OCI-LY7 (cell line): ENCODE measurements at regions of chr1 and their contacts with region 1.

Region 1: GRCh38 chr1:114564141-114564540 is 17.3 kb downstream of the BCAS2 start:
- DNase-seq: no peak
- H3K4me3 ChIP-seq: no peak overlapping the region
- H3K27ac ChIP-seq: no peak overlapping the region
- H3K4me1 ChIP-seq: no peaks in the 10 kb centered on the region
- CTCF ChIP-seq: no peak

Region 2: GRCh38 chr1:113101588-113101987 is 1462.6 kb before region 1 on chr1:
- CTCF ChIA-PET with region 1: no interaction called
- POLR2A ChIA-PET with region 1: interaction called, 10 read pairs
- intact Hi-C with region 1: no loop called
- DNase-seq: no peak
- H3K4me3 ChIP-seq: no peak overlapping the region
- H3K27ac ChIP-seq: no peak overlapping the region
- H3K4me1 ChIP-seq: no peaks in the 10 kb centered on the region
- CTCF ChIP-seq: no peak

Region 3: GRCh38 chr1:113949007-113949406 is 615.1 kb before region 1 on chr1:
- CTCF ChIA-PET with region 1: no interaction called
- POLR2A ChIA-PET with region 1: no interaction called
- intact Hi-C with region 1: no loop called
- DNase-seq: no peak
- H3K4me3 ChIP-seq: no peak overlapping the region
- H3K27ac ChIP-seq: no peak overlapping the region
- H3K4me1 ChIP-seq: peaks cover 48% of the 10 kb centered on the region
- CTCF ChIP-seq: peak; percentile 46

Region 4: DNA sequence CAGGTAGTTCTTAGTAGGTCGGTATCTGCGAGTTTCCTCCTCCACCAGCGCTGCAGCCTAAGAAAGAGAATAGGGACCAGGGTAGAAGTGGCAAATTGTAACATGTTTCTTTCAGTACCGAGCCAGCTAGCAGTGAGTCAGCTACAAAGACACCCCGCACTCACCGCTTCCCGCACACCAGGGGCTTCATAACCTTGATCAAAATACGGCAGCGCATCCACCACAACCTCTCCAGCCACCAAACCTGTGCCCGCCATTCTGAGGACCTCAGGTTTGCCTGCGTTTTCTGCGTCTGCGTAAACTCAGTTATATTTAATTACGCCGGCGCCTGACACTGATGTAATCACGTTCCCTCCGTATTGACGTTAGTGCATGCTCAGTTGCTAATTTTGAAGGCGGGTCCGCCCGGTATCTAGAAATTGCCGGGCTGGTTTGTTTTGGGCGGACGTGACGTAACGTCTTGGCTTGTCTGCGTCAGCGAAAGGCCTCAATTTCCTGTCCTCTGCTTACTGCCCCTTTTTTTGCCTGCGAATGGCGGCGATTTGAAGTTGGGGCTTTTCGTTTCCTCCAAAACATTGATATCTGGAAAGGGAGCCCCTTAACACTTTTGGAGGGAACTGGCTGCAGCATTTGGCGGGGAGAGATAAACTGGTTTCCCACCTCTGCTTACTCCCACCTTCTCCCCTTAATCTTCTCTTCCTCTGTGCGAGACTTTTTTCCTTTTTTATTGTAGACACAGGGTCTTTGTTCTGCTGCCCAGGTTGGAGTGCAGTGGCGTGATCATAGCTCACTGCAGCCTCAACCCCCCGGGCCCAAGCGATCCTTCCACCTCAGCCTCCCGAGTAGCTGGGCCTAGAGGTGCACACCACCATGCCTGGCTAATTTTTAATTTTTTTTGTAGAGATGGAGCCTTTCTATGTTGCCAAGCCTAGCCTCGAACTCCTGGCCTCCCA is 17.5 kb after region 1 on chr1 and contains the start of gene BCAS2:
- CTCF ChIA-PET with region 1: no interaction called
- POLR2A ChIA-PET with region 1: interaction called, 10 read pairs
- intact Hi-C with region 1: no loop called
- DNase-seq: peak; percentile 98
- H3K4me3 ChIP-seq: peak within 1 kb of the TSS; percentile 94
- H3K27ac ChIP-seq: peak within 1 kb of the TSS; percentile 47
- H3K4me1 ChIP-seq: peaks cover 15% of the 10 kb centered on the region
- CTCF ChIP-seq: no peak
- total RNA-seq, gene BCAS2: 40.8 and 41.8 TPM in 2 replicates

Region 5: GRCh38 chr1:114764689-114765088 is 200.5 kb after region 1 on chr1:
- CTCF ChIA-PET with region 1: no interaction called
- POLR2A ChIA-PET with region 1: no interaction called
- intact Hi-C with region 1: no loop called
- DNase-seq: peak; percentile 8
- H3K4me3 ChIP-seq: no peak overlapping the region
- H3K27ac ChIP-seq: no peak overlapping the region
- H3K4me1 ChIP-seq: no peaks in the 10 kb centered on the region
- CTCF ChIP-seq: no peak